GM12878 (cell line): ENCODE measurements at regions of chr7 and their contacts with region 1.

Region 1: GRCh38 chr7:14691597-14692203 is 210.9 kb downstream of the DGKB start:
- DNase-seq: no peak
- ATAC-seq: peak; percentile 68
- H3K4me3 ChIP-seq: no peak overlapping the region
- H3K27ac ChIP-seq: no peak overlapping the region
- H3K4me1 ChIP-seq: no peaks in the 10 kb centered on the region
- H3K27me3 ChIP-seq: no peaks in the 10 kb centered on the region
- CTCF ChIP-seq: peak; percentile 73 to 76 (median 75)
- EP300 ChIP-seq: no peak
- POLR2A ChIP-seq: no peak
- RAD21 ChIP-seq: peak; percentile 69

Region 2: DNA sequence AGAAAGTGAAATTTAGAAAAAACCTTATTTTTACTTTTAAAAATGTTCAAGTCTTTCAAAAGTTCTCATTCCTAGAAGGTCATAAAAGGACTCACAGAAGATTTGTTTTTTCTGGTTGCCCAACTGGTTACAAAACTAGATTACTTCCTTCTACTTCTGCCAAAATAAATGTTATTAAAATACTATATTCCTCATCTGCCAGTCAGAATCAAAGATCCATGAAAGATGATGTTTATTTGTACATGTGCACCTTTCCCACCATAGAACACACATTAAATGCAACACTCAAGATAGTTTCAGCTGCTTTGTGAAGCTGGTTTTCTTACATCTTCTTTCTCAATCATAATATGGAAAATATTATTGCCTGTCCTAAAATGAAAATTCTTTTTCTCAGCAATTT is 1167.6 kb before region 1 on chr7:
- CTCF ChIA-PET with region 1: interaction called, 14 read pairs
- POLR2A ChIA-PET with region 1: no interaction called
- RAD21 ChIA-PET with region 1: no interaction called
- SMC1A ChIA-PET with region 1: interaction called, 4 read pairs
- in situ Hi-C with region 1: no loop called
- intact Hi-C with region 1: loop called (anchors 5 kb)
- DNase-seq: no peak
- ATAC-seq: no peak
- H3K4me3 ChIP-seq: no peak overlapping the region
- H3K27ac ChIP-seq: no peak overlapping the region
- H3K4me1 ChIP-seq: no peaks in the 10 kb centered on the region
- H3K27me3 ChIP-seq: no peaks in the 10 kb centered on the region
- CTCF ChIP-seq: no peak
- EP300 ChIP-seq: no peak
- POLR2A ChIP-seq: no peak
- RAD21 ChIP-seq: no peak

Region 3: DNA sequence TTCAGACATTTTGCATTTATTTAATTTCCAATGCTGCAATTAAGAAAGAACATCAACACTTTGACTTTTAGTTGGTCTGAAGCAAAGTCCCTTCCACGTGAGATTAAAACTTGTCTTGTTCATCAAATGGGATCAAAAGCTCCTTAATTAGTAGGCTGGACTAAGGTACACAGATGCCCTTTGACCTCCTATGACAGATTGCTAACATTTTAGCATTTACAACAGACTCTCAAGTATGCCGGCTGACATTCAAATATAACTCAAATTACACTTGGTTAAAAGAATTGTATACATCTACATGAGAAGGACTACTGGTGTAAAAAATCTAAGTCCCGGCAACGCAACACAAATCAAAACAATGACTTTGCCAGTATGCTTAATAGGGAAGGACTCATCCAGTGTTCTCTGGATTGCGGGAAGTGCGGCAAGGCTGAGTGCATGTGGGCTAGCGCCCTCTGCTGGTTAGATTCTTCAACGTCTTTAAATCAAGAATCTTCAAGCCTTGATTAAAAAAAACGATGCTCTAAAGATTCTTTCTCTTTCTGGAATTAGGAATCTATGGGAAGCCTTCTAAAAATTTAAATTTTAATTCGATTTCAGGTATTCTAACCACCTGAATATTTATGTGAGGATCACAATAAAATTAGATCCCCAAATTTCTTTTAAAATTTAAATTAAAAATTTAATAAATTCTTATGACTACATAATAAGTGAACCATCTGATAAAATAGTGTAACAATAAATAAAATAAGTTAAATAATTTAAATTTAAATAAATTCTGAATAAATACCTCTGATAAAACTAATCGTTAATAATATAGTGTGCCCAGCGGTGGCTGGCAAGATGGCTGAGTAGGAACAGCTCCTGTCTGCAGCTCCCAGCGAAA is 233.9 kb before region 1 on chr7:
- CTCF ChIA-PET with region 1: interaction called, 21 read pairs
- POLR2A ChIA-PET with region 1: no interaction called
- RAD21 ChIA-PET with region 1: interaction called, 15 read pairs
- SMC1A ChIA-PET with region 1: interaction called, 25 read pairs
- in situ Hi-C with region 1: no loop called
- intact Hi-C with region 1: loop called (anchors 5 kb)
- DNase-seq: no peak
- ATAC-seq: peak; percentile 74
- H3K4me3 ChIP-seq: no peak overlapping the region
- H3K27ac ChIP-seq: no peak overlapping the region
- H3K4me1 ChIP-seq: no peaks in the 10 kb centered on the region
- H3K27me3 ChIP-seq: no peaks in the 10 kb centered on the region
- CTCF ChIP-seq: peak; percentile 70 to 77 (median 74)
- EP300 ChIP-seq: no peak
- POLR2A ChIP-seq: no peak
- RAD21 ChIP-seq: peak; percentile 64

Region 4: DNA sequence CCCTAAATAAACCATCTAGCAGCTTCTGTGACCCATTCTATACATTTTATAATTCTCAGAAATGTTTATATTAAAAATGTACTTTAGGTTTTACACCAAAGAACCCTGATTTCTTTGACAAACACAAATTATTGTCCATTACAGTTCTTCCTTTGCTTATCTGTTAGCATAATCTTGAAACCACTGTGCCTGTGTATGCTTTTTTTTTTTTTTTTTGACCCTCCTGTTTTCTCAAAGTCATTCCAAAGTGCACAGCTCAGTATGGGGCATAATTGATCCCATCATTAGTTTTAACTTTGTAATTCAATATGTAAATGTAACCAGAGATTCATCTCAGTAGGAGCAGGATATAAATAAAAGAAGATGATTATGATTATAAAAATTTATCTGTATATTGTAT is 18.5 kb before region 1 on chr7:
- CTCF ChIA-PET with region 1: interaction called, 16 read pairs
- POLR2A ChIA-PET with region 1: no interaction called
- RAD21 ChIA-PET with region 1: interaction called, 4 read pairs
- SMC1A ChIA-PET with region 1: interaction called, 3 read pairs
- in situ Hi-C with region 1: no loop called
- intact Hi-C with region 1: no loop called
- DNase-seq: no peak
- ATAC-seq: no peak
- H3K4me3 ChIP-seq: no peak overlapping the region
- H3K27ac ChIP-seq: no peak overlapping the region
- H3K4me1 ChIP-seq: no peaks in the 10 kb centered on the region
- H3K27me3 ChIP-seq: no peaks in the 10 kb centered on the region
- CTCF ChIP-seq: no peak
- EP300 ChIP-seq: no peak
- POLR2A ChIP-seq: no peak
- RAD21 ChIP-seq: no peak

Region 5: GRCh38 chr7:15015545-15016326 is 324.0 kb after region 1 on chr7:
- CTCF ChIA-PET with region 1: interaction called, 13 read pairs
- POLR2A ChIA-PET with region 1: no interaction called
- RAD21 ChIA-PET with region 1: interaction called, 5 read pairs
- SMC1A ChIA-PET with region 1: interaction called, 7 read pairs
- in situ Hi-C with region 1: no loop called
- intact Hi-C with region 1: no loop called
- DNase-seq: peak; percentile 5
- ATAC-seq: peak; percentile 97
- H3K4me3 ChIP-seq: no peak overlapping the region
- H3K27ac ChIP-seq: no peak overlapping the region
- H3K4me1 ChIP-seq: no peaks in the 10 kb centered on the region
- H3K27me3 ChIP-seq: no peaks in the 10 kb centered on the region
- CTCF ChIP-seq: peak; percentile 54 to 57 (median 54); a peak in 5 of 6 replicates
- EP300 ChIP-seq: no peak
- POLR2A ChIP-seq: no peak
- RAD21 ChIP-seq: peak; percentile 56